HEK293 (cell line): ENCODE measurements at regions of chr4 and their contacts with region 1.

Region 1: DNA sequence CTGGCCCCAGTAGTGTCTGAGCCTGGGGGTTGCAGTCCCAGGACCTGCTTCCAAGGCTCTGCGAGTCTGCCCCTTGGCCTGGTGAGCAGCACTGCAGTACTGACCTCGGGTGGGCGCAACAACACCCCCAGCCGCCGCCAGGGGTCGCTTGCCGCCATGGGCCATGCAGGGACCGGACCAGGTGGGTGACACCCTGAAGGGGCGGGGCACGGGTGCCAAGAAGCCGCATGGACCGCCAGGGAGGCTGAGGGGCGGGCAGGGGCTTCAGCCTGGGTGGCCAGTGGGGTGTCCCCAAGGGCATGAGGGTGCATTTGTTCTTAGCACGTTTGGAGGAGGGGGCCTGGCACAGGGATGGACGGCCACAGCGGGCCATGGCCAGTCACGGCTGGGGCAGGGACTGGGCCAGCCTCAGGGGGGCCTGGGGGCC is 25.0 kb downstream of the TACC3 start:
- H3K4me3 ChIP-seq: no peak overlapping the region
- H3K27ac ChIP-seq: no peak overlapping the region
- H3K4me1 ChIP-seq: no peaks in the 10 kb centered on the region
- CTCF ChIP-seq: peak; percentile 93

Region 2: DNA sequence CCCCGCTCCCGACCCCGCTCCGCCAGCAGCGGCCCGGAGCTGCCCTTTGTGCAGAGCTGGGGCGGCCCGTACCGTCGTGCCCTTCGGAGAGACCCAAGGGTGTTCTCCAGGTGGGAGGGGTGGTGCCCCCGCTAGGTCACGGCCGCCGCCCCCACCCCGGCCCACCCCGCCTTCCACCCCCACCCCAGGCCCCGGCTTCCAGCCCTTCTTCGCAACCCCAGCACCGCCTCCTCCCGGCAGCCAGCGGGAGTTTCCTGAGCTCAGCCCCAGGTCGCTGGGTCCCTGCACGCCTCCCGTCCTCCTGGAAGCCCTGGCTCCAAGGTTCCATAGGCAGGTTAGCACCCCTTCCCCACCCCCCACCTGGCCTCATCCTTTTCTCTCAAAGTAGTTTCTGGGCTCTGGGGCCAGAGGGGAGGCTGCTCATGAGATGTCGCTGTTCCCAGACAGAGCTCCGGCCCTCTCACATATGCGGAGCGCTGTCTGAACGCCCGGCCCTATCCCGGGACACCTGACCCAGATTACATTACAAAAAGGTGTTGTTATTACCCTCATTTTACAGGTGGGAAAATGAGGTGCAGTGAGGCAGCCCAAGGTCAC is 21.6 kb after region 1 on chr4:
- CTCF ChIA-PET with region 1: interaction called, 23 read pairs
- POLR2A ChIA-PET with region 1: no interaction called
- H3K4me3 ChIP-seq: peak overlapping the region; percentile 26
- H3K27ac ChIP-seq: no peak overlapping the region
- H3K4me1 ChIP-seq: no peaks in the 10 kb centered on the region
- CTCF ChIP-seq: no peak

Region 3: GRCh38 chr4:1792832-1793495 is 46.7 kb after region 1 on chr4 and contains the start of gene FGFR3:
- CTCF ChIA-PET with region 1: interaction called, 14 read pairs
- POLR2A ChIA-PET with region 1: interaction called, 5 read pairs
- H3K4me3 ChIP-seq: peak within 1 kb of the TSS; percentile 63
- H3K27ac ChIP-seq: peak within 1 kb of the TSS; percentile 69; the same call in 1 of the 2 replicates
- H3K4me1 ChIP-seq: no peaks in the 10 kb centered on the region
- CTCF ChIP-seq: no peak

Region 4: DNA sequence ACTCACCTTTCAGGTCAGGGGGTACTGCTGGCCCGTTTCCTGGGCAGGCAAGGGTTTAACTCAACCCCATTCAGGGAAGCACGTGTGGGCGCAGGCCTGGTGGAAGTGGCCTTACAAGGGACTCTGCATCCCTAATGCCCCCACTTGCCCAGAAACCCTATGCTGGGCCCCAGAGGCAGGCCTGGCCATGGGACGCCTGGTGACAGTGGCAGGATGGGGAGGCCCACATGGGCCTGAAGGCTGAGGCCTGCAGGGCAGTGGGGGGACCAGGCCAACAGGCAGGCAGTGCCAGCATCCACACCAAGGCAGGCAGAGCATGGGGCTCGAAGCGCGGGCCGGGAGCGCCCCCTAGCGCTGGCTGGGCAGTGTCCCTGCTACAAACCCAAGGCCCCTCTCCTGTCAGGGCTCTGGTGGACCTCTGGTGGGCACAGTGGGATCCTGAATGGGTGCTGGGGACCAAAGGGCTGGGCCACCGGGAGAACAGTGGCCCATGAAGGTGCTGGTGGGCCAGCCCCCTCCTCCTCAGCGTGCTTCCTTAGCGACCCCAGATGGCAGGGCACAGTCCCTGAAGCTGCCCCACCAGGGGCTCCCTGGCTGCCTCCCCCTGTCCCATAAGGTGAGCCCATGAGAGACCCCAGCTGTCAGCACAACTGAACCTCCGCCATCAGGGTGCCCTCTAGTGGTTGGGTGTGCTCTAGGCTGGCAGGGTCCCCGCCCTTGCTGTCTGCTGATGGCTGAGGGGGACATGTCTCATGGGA is 63.7 kb after region 1 on chr4:
- CTCF ChIA-PET with region 1: interaction called, 148 read pairs
- POLR2A ChIA-PET with region 1: interaction called, 7 read pairs
- H3K4me3 ChIP-seq: no peak overlapping the region
- H3K27ac ChIP-seq: no peak overlapping the region
- H3K4me1 ChIP-seq: no peaks in the 10 kb centered on the region
- CTCF ChIP-seq: peak; percentile 95